ENCODE measurements at regions of chr11 and their contacts with region 1.

Region 1: GRCh38 chr11:95835768-95836488 is 45.6 kb downstream of the CEP57 start:
- DNase-seq: peak; percentile 89
- H3K4me3 Mint-ChIP-seq: no peak overlapping the region
- H3K27ac Mint-ChIP-seq: peak overlapping the region; percentile 17
- H3K4me1 Mint-ChIP-seq: peaks cover 11% of the 10 kb centered on the region
- H3K27me3 Mint-ChIP-seq: no peaks in the 10 kb centered on the region
- CTCF ChIP-seq: peak; percentile 72

Region 2: GRCh38 chr11:95877291-95877690 is 41.4 kb after region 1 on chr11:
- CTCF ChIA-PET with region 1: interaction called, 11 read pairs
- POLR2A ChIA-PET with region 1: no interaction called
- intact Hi-C with region 1: no loop called
- DNase-seq: peak; percentile 80
- H3K4me3 Mint-ChIP-seq: no peak overlapping the region
- H3K27ac Mint-ChIP-seq: no peak overlapping the region
- H3K4me1 Mint-ChIP-seq: peaks cover 12% of the 10 kb centered on the region
- H3K27me3 Mint-ChIP-seq: no peaks in the 10 kb centered on the region
- CTCF ChIP-seq: no peak

Region 3: GRCh38 chr11:96215110-96215782 is 379.3 kb after region 1 on chr11:
- CTCF ChIA-PET with region 1: no interaction called
- POLR2A ChIA-PET with region 1: no interaction called
- intact Hi-C with region 1: no loop called
- DNase-seq: peak; percentile 46
- H3K4me3 Mint-ChIP-seq: no peak overlapping the region
- H3K27ac Mint-ChIP-seq: peak overlapping the region; percentile 36
- H3K4me1 Mint-ChIP-seq: peaks cover 44% of the 10 kb centered on the region
- H3K27me3 Mint-ChIP-seq: no peaks in the 10 kb centered on the region
- CTCF ChIP-seq: no peak

Region 4: GRCh38 chr11:96389720-96390487 is 554.0 kb after region 1 on chr11 and contains the starts of genes CCDC82 and JRKL:
- CTCF ChIA-PET with region 1: interaction called, 53 read pairs
- POLR2A ChIA-PET with region 1: interaction called, 4 read pairs
- intact Hi-C with region 1: loop called (anchors 1 kb)
- DNase-seq: peak; percentile 98
- H3K4me3 Mint-ChIP-seq: peak within 1 kb of the TSS; percentile 77
- H3K27ac Mint-ChIP-seq: peak within 1 kb of the TSS; percentile 93
- H3K4me1 Mint-ChIP-seq: peaks cover 11% of the 10 kb centered on the region
- H3K27me3 Mint-ChIP-seq: no peaks in the 10 kb centered on the region
- CTCF ChIP-seq: no peak
- total RNA-seq, gene CCDC82: 15.8 and 21.4 TPM in 2 replicates
- total RNA-seq, gene JRKL: 11.5 and 16.3 TPM in 2 replicates

Region 5: GRCh38 chr11:96424693-96425092 is 588.8 kb after region 1 on chr11:
- CTCF ChIA-PET with region 1: interaction called, 13 read pairs
- POLR2A ChIA-PET with region 1: no interaction called
- intact Hi-C with region 1: loop called (anchors 1 kb)
- DNase-seq: peak; percentile 4
- H3K4me3 Mint-ChIP-seq: no peak overlapping the region
- H3K27ac Mint-ChIP-seq: no peak overlapping the region
- H3K4me1 Mint-ChIP-seq: no peaks in the 10 kb centered on the region
- H3K27me3 Mint-ChIP-seq: peaks cover 80% of the 10 kb centered on the region
- CTCF ChIP-seq: no peak